Cardiac septum (tissue), 1 donor: ENCODE measurements at regions of chr21 and their contacts with region 1.

Region 1: DNA sequence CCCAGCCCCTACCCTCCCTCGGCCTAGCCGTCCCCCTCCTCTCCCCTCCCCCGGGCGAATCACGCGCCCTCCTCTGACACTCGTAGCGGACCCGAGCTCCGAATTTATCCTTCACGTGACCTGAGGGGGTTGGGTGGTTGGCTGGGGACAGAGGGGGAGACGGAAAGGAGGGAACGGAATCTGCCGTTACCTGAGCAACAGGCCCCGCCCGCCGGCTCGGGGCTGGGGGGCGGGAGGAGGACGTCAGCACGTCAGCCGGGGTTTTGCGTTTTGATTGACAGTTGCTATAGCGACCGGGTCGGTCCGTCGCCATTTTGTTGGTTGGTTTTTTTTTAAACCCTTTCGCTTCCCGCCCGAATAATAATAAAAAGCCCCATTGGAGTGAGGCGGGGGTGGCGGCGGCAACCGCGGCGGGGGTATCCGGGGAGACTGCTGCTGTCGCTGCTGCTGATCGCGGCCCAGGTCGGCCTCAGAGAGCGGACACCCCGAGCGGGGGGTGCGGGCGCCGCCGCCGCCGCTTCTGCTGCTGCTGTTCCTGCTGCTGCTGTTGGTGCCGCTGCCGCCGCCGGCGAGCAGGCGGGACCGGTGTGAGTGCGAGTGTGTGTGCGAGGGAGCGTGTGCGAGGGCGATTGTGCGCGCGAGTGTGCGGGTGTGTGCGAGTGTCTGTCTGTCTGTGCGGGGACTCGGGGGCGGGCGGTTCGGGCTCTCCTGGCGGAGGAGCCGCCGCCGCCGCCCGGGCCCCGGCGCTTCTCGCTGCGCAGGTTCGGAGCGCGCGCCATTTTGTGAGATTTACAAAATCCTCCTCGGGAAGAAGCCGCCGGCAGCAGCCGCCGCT is at the start of gene DYRK1A:
- DNase-seq: peak; percentile 99
- total RNA-seq, gene DYRK1A: 72.9 TPM

Region 2: DNA sequence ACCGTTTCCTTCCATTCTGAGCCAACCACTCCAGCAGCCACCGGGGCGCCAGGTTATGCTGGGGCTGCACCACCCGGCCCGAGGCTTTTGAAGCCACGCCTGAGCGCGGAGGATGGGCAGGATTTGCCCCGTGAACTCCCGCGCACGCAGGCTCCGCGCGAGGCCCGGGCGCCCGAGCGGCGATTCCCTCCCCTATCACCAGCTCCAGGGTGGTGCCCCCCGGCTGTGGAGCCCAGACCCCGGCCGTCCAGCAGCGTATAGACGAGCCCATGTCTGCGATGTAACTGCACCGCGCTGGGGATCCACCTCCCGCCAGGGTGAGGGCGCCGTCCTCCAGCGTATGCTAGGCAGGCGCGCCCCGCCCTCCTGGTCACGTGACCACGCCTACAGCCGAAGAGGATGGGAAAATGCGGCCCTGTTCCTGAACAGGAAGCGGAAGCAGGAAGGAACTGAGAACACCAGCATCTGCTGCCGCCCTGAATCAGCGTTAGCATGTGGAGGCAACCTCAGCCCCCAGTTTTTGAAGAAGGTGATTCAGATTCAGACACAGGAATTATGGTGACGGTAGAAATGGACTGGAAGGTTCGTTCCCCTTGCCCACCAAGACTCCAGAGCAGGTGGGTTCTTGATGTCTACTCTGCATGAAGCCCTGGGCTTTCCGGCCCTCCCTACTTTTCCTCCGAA is 145.6 kb before region 1 on chr21:
- intact Hi-C with region 1: loop called (anchors 2 kb)
- DNase-seq: peak; percentile 98

Region 3: GRCh38 chr21:37267269-37268184 is 99.2 kb before region 1 on chr21 and contains the start of gene VPS26C:
- intact Hi-C with region 1: loop called (anchors 1 kb)
- DNase-seq: peak; percentile 99
- total RNA-seq, gene VPS26C: 44.2 TPM

Region 4: DNA sequence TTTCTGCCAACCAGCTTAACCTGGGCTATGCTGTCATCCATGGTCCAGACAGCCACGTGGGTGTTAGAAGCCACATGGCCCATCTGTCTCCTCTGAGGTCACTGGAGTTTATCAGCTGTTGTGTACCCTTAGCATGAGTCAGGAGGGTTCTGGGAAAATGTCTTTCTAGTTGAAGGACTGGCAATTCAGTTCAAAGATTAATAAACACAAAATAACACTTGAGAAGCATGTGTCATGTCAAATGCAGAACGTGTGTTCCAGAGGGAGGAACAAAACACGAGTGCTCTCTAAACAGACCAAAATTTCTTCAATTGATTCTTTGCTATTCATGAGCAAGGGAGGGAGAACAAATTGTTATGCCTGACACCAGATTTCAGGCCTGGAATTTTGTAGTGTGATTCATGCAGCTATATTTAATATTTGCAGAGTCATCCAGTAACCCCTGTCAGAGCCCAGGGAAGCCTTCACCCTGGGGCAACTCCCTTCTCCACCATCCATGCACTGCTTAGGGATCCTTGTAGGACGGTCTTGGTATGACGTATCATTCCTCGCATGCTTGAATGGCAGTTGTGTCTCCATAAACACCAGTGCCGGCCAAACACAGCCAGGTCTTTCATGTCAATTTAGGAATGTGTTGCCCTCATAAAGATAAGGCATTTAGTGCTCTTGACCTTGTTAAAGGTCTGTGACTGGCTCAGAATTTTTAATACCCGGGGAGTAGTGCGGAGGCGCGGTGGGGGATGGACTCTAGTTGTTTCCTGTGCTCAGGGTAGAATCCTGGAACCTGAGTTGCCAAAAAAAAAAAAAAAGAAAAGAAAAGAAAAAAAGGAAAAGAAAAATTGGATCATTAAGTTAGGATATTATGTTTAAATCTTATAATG is 27.8 kb before region 1 on chr21:
- intact Hi-C with region 1: loop called (anchors 1 kb)
- DNase-seq: no peak

Region 5: DNA sequence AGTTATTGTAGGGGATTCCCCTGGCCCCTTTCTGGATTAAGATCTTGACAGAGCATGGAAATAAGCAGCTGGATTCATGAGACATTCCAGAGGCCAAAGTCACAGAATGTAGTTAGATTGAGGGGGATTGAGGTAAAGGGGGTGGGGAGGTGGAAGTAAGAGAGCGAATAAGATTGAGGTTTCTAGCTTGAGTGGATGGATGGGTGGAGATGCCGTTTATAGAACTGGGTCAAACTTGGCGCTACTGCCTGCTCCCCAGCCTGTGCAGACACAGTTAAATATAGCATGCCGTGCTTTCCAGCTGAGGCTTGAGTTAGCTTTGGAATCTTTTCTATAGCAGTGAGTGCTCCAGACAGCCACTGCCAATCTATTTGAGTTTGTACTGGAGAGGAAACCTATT is 85.5 kb after region 1 on chr21:
- intact Hi-C with region 1: loop called (anchors 5 kb)
- DNase-seq: no peak

Region 6: GRCh38 chr21:37563641-37564340 is 197.1 kb after region 1 on chr21:
- intact Hi-C with region 1: loop called (anchors 5 kb)
- DNase-seq: peak; percentile 97